ENCODE measurements at regions of chr7 and their contacts with region 1.

Region 1: DNA sequence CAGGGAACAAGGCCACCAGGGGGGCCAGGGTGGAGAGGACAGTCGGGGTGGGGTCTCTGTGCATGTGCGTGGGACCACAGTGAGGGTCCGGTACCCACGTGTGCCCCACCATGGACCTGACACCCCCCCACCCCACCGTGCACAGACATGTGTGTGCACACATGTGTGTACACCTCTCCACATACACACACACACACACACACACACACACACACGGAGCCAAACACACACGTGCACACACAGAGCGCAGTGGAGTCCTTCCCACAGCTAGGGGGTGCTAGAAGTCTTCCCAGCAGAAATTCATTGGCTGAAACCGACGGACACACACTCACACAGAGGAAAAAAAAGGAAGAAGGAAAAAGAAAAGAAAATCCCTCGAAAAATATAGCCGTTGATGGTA is 42.8 kb upstream of the GNA12 start:
- DNase-seq: peak; percentile 56
- H3K4me3 ChIP-seq: no peak overlapping the region
- H3K27ac ChIP-seq: no peak overlapping the region
- H3K27me3 ChIP-seq: peaks cover 11% of the 10 kb centered on the region
- CTCF ChIP-seq: peak; percentile 94

Region 2: GRCh38 chr7:2870471-2870931 is 16.4 kb before region 1 on chr7:
- CTCF ChIA-PET with region 1: no interaction called
- POLR2A ChIA-PET with region 1: no interaction called
- DNase-seq: no peak
- H3K4me3 ChIP-seq: no peak overlapping the region
- H3K27ac ChIP-seq: peak overlapping the region; percentile 11
- H3K27me3 ChIP-seq: no peaks in the 10 kb centered on the region
- CTCF ChIP-seq: no peak

Region 3: DNA sequence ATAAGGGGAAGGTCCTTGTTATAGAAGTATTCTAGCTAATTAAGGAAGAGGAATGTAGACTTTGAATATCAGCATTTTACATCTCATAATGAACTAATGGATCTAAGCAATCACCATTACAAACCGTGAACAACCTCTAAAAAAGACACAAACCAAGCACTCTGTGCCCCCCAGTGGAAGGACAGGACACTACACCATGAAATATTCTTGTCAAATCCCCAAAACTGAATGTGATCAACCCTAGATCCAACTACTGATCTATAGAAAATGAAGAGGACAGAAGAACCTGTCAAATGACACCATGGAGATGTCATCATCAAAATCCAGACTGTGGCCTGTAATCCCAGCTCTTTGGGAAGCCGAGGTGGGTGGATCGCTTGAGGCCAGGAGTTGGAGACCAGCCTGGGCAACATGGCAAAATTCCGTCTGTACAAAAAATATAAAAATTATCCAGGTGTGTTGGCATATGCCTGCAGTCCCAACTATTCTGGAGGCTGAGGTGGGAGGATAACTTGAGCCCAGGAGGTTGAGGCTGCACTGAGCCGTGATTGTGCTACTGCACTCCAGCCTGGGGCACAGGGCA is 268.1 kb after region 1 on chr7:
- CTCF ChIA-PET with region 1: interaction called, 12 read pairs
- POLR2A ChIA-PET with region 1: no interaction called
- DNase-seq: peak; percentile 8
- H3K4me3 ChIP-seq: no peak overlapping the region
- H3K27ac ChIP-seq: no peak overlapping the region
- H3K27me3 ChIP-seq: peaks cover 10% of the 10 kb centered on the region
- CTCF ChIP-seq: peak; percentile 73

Region 4: DNA sequence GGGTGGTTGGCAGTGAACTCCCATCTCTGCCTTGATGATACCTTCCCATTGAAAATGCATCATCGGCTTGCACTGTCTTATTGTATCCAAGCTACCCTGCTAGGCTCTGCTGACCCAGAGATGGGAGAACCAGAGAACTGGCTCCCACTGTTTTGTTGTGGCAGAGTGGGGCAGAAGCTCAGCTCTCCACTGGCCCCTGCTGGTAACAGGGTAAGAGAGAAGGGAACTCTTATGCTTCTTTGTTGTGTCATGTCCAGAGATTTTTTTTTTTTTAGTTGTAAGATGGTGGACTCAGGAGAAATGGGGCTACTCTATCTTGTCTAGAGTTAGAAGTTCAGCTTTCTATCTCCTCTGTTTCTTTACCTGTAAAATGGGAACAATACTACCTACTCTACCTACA is 313.6 kb after region 1 on chr7:
- CTCF ChIA-PET with region 1: interaction called, 11 read pairs
- POLR2A ChIA-PET with region 1: no interaction called
- DNase-seq: no peak
- H3K4me3 ChIP-seq: no peak overlapping the region
- H3K27ac ChIP-seq: no peak overlapping the region
- H3K27me3 ChIP-seq: no peaks in the 10 kb centered on the region
- CTCF ChIP-seq: peak; percentile 74